ENCODE measurements at regions of chr20 and their contacts with region 1.

Region 1: GRCh38 chr20:14449323-14449722 is 111.9 kb upstream of the FLRT3 start:
- DNase-seq: no peak
- H3K4me3 Mint-ChIP-seq: peak overlapping the region; percentile 21
- H3K27ac Mint-ChIP-seq: peak overlapping the region; percentile 98
- H3K4me1 Mint-ChIP-seq: peaks cover 61% of the 10 kb centered on the region
- H3K27me3 Mint-ChIP-seq: no peaks in the 10 kb centered on the region
- CTCF ChIP-seq: no peak

Region 2: GRCh38 chr20:14491436-14491835 is 42.1 kb after region 1 on chr20:
- CTCF ChIA-PET with region 1: no interaction called
- intact Hi-C with region 1: loop called (anchors 5 kb)
- DNase-seq: no peak
- H3K4me3 Mint-ChIP-seq: no peak overlapping the region
- H3K27ac Mint-ChIP-seq: no peak overlapping the region
- H3K4me1 Mint-ChIP-seq: peaks cover 18% of the 10 kb centered on the region
- H3K27me3 Mint-ChIP-seq: no peaks in the 10 kb centered on the region
- CTCF ChIP-seq: no peak